ENCODE measurements at regions of chr13 and their contacts with region 1.

Region 1: GRCh38 chr13:104408733-104409132 is 1342.5 kb upstream of the SLC10A2 start:
- DNase-seq: no peak

Region 2: DNA sequence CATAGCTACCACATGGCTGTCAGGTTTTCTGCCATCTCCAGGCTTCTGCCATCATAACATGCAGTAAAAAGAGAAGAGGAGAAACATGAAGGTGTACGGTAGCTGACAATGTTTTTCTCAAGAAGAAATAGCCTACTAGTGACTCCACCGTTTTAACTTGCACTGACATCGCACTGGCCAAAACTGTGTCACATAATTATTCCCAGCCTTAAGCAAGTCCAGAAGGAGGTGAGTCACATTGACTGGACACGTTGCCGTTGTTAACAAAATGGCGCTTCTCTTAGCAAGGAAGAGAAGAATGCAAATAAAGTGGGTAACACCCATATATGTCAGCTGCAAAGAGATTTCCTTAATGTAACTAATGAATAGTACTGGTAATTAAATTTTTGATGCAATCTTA is 532.2 kb before region 1 on chr13:
- CTCF ChIA-PET with region 1: no interaction called
- POLR2A ChIA-PET with region 1: no interaction called
- DNase-seq: no peak

Region 3: GRCh38 chr13:104296286-104296685 is 112.4 kb before region 1 on chr13:
- CTCF ChIA-PET with region 1: interaction called, 10 read pairs
- POLR2A ChIA-PET with region 1: no interaction called
- DNase-seq: no peak

Measured in HEK293T (cell line).